RWPE1 (cell line): ENCODE measurements at regions of chr13 and their contacts with region 1.

Region 1: DNA sequence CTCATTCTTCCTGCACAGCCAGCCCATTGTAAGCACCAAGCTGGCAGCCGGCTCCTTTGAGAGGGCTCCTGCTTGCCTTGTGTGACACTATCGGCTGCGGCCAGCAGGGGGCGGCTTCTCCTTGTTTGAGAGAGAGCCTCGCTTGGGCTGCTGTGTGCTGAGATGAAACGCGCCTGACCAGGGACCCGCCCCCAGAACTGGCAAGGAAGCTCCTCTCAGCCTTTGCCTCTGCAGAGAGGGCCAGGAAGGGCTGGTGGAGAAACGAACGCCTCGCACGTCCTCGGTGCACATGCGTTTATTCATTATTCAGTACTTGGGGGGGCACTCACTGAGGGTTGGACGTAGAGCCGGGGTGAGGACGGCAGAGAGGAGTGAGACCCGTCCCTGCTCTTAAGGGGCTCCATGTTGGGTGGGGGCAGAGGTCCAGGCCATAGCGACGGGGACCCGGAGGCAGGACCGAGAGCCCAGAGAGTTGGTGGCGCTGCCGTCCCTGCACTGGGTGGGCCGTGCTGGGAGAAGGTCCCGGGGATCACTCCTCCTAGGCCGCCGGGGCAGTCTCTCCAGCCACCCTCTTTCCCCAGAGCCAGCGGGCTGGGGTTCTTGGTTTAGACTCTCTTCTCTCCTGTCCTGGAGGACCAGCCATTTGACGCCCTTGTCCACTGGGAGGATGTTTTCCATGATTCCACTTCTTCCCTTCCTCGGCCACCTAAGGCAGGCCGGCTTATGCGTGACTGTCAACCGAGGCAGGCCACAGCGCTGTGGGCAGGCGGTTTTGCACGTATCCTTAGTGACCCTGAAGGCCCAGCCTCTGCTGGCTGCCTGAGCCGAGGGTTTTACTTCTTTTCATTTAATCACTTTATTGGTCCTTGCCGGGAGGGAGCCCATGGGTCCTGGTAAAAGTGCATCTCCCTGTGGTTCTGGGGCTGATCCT is 174.5 kb downstream of the KATNAL1 start:
- DNase-seq: peak; percentile 80
- H3K27ac ChIP-seq: no peak overlapping the region
- CTCF ChIP-seq: peak; percentile 90

Region 2: GRCh38 chr13:30158774-30159445 is 26.0 kb after region 1 on chr13:
- CTCF ChIA-PET with region 1: interaction called, 18 read pairs
- POLR2A ChIA-PET with region 1: no interaction called
- DNase-seq: peak; percentile 6
- H3K27ac ChIP-seq: no peak overlapping the region
- CTCF ChIP-seq: 0 out of 2 replicates have a peak, but pooled peaks have one; percentile 10